HAP-1 (cell line): ENCODE measurements at regions of chr10 and their contacts with region 1.

Region 1: DNA sequence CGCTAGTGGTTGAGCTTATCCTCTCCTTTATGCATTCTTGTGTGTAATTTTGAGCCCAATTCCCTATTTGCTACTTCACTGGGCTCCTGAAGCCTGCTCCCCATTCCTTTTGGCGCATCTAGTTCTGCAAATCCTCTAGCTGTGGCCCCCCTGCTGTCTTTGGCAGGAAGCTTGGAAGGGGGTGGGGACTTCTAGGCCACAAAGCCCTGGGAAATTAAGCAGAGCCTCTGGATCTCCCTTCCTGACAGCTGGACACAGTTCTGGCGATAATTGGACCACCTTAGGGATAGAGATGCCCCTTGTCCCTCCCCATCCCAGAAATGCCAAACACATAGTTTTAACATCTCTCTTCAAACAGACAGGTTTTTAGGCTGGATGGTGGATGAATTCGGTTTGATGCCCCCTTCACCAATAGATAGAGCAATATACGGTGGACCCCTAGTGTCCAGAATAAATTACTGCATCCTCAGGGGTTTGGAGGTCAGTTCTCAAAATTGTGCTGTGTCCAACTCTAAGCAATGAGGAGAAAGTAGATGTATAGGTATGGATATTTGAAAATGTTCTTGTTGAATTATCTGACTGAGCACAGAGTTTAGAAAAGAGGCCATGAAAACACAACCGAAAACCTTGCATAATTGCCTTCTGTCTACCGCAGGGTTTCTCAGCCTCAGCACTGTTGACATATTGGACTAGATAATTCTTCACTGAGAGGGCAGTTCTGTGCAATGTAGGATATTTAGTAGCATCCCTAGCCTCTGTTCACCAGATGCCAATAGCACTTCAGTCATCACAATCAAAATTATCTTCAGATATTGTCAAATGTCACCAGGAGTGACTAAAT is 75.5 kb downstream of the PAPSS2 start:
- DNase-seq: peak; percentile 26 to 51
- H3K4me3 ChIP-seq: no peak overlapping the region
- H3K4me1 ChIP-seq: peaks cover 6% of the 10 kb centered on the region
- H3K27me3 ChIP-seq: no peaks in the 10 kb centered on the region

Region 2: GRCh38 chr10:87547734-87548311 is 187.4 kb before region 1 on chr10:
- in situ Hi-C with region 1: loop called (anchors 25 kb)
- DNase-seq: no peak
- H3K4me3 ChIP-seq: no peak overlapping the region
- H3K4me1 ChIP-seq: no peaks in the 10 kb centered on the region; the same call in 1 of the 2 replicates
- H3K27me3 ChIP-seq: no peaks in the 10 kb centered on the region

Region 3: GRCh38 chr10:88194041-88194887 is 459.1 kb after region 1 on chr10:
- in situ Hi-C with region 1: no loop called
- DNase-seq: no peak
- H3K4me3 ChIP-seq: no peak overlapping the region
- H3K4me1 ChIP-seq: no peaks in the 10 kb centered on the region
- H3K27me3 ChIP-seq: no peaks in the 10 kb centered on the region